Left ventricle myocardium superior (tissue), 1 donor: ENCODE measurements at regions of chr22 and their contacts with region 1.

Region 1: DNA sequence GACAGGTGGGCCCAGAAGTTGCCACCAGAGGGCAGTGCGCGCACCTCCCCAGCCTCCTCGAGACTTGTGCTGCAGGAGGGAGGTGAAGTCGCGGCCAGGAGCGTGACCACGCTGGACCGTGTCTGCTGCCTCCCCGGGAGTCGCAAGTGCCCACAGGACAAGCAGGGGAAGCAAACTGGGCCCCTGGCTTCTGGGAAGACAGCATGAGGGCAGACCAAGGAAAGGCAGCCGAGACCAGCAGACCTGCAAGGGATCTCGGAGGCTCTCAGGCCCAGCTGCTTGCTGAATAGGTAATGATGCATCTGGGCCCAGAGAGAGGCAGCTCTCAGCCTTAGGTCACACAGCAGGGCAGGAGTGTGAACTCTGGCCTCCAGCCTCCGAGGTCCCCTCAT is 17.0 kb upstream of the IL2RB start:
- DNase-seq: peak; percentile 92
- ATAC-seq: peak; percentile 95

Region 2: DNA sequence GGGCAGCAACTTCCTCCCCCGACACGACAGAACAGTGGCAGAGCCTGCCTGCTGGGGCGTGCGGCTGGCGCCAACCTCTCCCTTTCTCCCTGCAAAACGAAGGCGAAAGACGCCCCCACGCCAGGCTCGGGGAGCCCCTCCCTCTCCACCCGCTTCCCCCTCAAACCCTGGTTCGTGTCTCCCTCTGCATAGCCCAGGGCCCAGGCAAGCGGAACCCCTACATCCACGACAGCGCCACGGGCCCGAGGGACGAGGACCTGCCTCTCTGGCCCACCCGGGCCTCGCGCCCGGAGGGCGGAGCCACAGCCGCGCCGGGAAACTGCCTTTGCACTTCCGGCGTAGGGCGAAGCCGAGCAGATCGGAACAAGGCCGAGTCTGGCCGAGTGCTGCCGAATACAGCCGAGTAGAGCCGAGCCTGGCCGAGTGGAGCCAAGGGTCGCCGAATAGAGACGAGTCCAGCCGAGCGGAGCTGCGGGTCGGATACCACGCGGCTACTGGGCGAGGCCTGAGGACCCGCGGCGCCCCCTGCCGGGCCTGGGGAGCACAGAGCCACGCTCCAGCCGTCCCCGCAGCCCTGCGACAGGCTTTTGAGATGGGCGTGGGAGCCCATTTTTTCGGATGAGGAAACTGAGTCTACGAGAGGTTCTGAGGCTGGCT is 32.6 kb after region 1 on chr22:
- intact Hi-C with region 1: loop called (anchors 2 kb)
- DNase-seq: peak; percentile 100
- ATAC-seq: peak; percentile 90